ENCODE measurements at regions of chr1 and their contacts with region 1.

Region 1: GRCh38 chr1:210407207-210407886 is 78.6 kb downstream of the HHAT start:
- DNase-seq: peak; percentile 60 to 77
- ATAC-seq: peak; percentile 88 to 96; a peak in 5 of 6 replicates
- H3K4me3 ChIP-seq: no peak overlapping the region
- H3K27ac ChIP-seq: peak overlapping the region; percentile 29 to 74; a peak in 5 of 6 replicates
- H3K4me1 ChIP-seq: peaks cover 5% of the 10 kb centered on the region
- CTCF ChIP-seq: peak; percentile 98
- EP300 ChIP-seq: no peak
- POLR2A ChIP-seq: no peak
- RAD21 ChIP-seq: peak; percentile 96 to 98

Region 2: DNA sequence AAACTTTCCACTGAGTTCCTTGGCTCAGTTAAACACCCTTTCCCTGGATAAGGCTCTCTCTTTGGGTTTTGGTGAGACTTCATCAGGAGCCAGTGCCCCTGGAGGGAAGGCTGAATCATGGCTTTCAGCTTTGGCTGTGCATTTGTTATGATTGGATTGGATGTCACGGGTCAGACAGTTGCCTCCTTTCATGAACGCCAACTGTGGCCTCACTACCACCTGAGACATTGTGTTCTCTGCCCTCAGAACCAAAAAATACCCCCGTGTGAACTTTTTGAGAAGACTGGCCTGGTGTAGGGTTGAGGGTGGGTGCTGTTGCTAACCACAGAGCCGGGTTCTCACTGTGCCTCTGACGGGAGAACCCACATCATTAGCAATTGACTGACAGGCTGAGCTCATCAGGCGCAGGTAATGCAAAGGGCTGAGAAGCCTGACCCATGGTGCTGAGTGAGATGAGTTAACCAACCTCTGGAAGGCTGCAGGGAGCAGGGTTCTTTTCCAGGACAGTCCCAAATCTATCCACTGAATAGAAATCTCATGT is 13.0 kb before region 1 on chr1:
- CTCF ChIA-PET with region 1: interaction called, 13 read pairs
- POLR2A ChIA-PET with region 1: no interaction called
- DNase-seq: no peak
- ATAC-seq: no peak
- H3K4me3 ChIP-seq: no peak overlapping the region
- H3K27ac ChIP-seq: no peak overlapping the region
- H3K4me1 ChIP-seq: peaks cover 3% of the 10 kb centered on the region; the same call in 1 of the 3 replicates
- CTCF ChIP-seq: no peak
- EP300 ChIP-seq: no peak
- POLR2A ChIP-seq: no peak
- RAD21 ChIP-seq: no peak